HCT116 (cell line): ENCODE measurements at regions of chr4 and their contacts with region 1.

Region 1: GRCh38 chr4:97987019-97987648 is 156.1 kb downstream of the STPG2 start:
- DNase-seq: peak; percentile 44
- ATAC-seq: 0 out of 2 replicates have a peak, but pooled peaks have one; percentile 49
- H3K4me3 ChIP-seq: no peak overlapping the region
- H3K27ac ChIP-seq: no peak overlapping the region
- H3K4me1 ChIP-seq: no peaks in the 10 kb centered on the region
- H3K27me3 ChIP-seq: no peaks in the 10 kb centered on the region
- CTCF ChIP-seq: peak; percentile 36 to 74 (median 59); a peak in 4 of 6 replicates
- POLR2A ChIP-seq: no peak
- RAD21 ChIP-seq: peak; percentile 79

Region 2: GRCh38 chr4:96375367-96375766 is 1611.8 kb before region 1 on chr4:
- CTCF ChIA-PET with region 1: no interaction called
- POLR2A ChIA-PET with region 1: no interaction called
- RAD21 ChIA-PET with region 1: no interaction called
- intact Hi-C with region 1: loop called (anchors 10 kb)
- DNase-seq: no peak
- ATAC-seq: no peak
- H3K4me3 ChIP-seq: no peak overlapping the region
- H3K27ac ChIP-seq: no peak overlapping the region
- H3K4me1 ChIP-seq: no peaks in the 10 kb centered on the region
- H3K27me3 ChIP-seq: no peaks in the 10 kb centered on the region
- CTCF ChIP-seq: no peak
- POLR2A ChIP-seq: no peak
- RAD21 ChIP-seq: no peak

Region 3: DNA sequence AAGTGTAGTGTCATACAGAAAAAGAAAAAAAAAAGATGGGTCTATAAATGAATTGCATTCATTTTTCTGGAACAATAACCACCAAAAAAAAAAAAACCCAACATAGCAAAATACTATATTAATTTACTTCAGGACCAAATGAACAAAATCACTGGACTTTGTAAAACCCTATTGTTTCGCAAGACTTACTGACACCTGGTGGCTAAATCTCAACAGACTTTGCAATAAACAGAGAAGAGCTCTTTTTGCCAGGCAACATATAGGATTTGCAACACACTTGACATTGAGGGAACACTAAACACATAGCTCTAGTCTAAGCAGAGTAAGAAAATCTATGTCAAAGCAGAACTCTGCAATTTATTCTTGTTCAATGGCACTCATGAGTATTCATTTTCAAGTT is 834.1 kb before region 1 on chr4:
- CTCF ChIA-PET with region 1: interaction called, 3 read pairs
- POLR2A ChIA-PET with region 1: no interaction called
- RAD21 ChIA-PET with region 1: no interaction called
- intact Hi-C with region 1: loop called (anchors 10 kb)
- DNase-seq: peak; percentile 10
- ATAC-seq: no peak; the same call in 1 of the 2 replicates
- H3K4me3 ChIP-seq: no peak overlapping the region
- H3K27ac ChIP-seq: no peak overlapping the region
- H3K4me1 ChIP-seq: no peaks in the 10 kb centered on the region
- H3K27me3 ChIP-seq: no peaks in the 10 kb centered on the region
- CTCF ChIP-seq: peak; percentile 23 to 51 (median 41); a peak in 4 of 6 replicates
- POLR2A ChIP-seq: no peak
- RAD21 ChIP-seq: peak; percentile 59